Endothelial cell of umbilical vein (primary cell): ENCODE measurements at regions of chr19 and their contacts with region 1.

Region 1: GRCh38 chr19:36214386-36215275 is at the starts of genes ZNF146 and ZNF565:
- DNase-seq: peak; percentile 98
- H3K4me3 ChIP-seq: peak within 1 kb of the TSS; percentile 78 to 93 (median 87)
- H3K27ac ChIP-seq: peak within 1 kb of the TSS; percentile 82
- H3K4me1 ChIP-seq: peaks cover 5% of the 10 kb centered on the region
- H3K27me3 ChIP-seq: no peaks in the 10 kb centered on the region
- CTCF ChIP-seq: no peak
- POLR2A ChIP-seq: peak; percentile 86
- total RNA-seq, gene ZNF146: 63.3 and 65.9 TPM in 2 replicates
- total RNA-seq, gene ZNF565: 3.1 and 3.6 TPM in 2 replicates

Region 2: GRCh38 chr19:35908973-35909683 is 305.5 kb before region 1 on chr19:
- CTCF ChIA-PET with region 1: no interaction called
- POLR2A ChIA-PET with region 1: no interaction called
- dilution Hi-C with region 1: no loop called
- intact Hi-C with region 1: no loop called
- DNase-seq: no peak
- H3K4me3 ChIP-seq: no peak overlapping the region
- H3K27ac ChIP-seq: no peak overlapping the region
- H3K4me1 ChIP-seq: no peaks in the 10 kb centered on the region
- H3K27me3 ChIP-seq: no peaks in the 10 kb centered on the region
- CTCF ChIP-seq: no peak
- POLR2A ChIP-seq: no peak

Region 3: DNA sequence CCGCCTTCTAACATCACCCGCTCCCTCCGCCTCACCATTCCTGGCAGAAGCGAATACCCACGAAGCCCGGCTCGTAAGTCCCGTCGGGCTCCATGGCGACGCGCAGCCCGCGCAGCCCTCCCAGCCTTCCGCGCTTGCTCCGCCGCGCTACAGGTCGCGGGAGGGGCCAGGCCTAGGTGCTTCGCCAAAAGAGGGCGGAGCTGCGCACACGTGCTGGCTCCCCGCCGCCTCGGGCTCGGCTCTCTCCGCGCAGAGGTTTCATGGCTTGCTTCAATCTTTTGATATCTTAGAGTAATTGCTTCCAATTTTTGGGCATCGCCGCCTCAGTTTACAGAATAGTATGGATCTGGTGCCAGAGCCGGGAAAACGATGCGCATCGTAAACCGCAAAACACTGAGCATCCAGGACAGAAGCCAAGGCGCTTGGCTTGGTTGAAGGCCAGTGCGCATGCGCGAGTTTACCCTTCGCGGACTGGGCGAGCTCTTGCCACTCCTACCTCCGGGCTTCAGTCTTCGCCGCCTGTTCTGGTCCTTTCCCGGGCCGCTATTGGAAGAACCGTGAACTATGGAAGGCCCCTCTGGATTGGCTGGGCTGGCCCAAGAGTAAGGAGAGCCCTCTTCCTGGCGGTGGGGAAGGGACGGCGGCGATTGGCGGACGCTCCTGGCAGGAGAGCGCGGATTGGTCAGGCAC is 99.7 kb before region 1 on chr19 and contains the start of gene POLR2I:
- CTCF ChIA-PET with region 1: no interaction called
- POLR2A ChIA-PET with region 1: interaction called, 3 read pairs
- dilution Hi-C with region 1: no loop called
- intact Hi-C with region 1: loop called (anchors 1 kb)
- DNase-seq: peak; percentile 100
- H3K4me3 ChIP-seq: peak within 1 kb of the TSS; percentile 68 to 81 (median 79)
- H3K27ac ChIP-seq: peak within 1 kb of the TSS; percentile 68
- H3K4me1 ChIP-seq: peaks cover 15% of the 10 kb centered on the region
- H3K27me3 ChIP-seq: no peaks in the 10 kb centered on the region
- CTCF ChIP-seq: no peak
- POLR2A ChIP-seq: peak; percentile 59
- total RNA-seq, gene POLR2I: 63.3 and 64.8 TPM in 2 replicates

Region 4: DNA sequence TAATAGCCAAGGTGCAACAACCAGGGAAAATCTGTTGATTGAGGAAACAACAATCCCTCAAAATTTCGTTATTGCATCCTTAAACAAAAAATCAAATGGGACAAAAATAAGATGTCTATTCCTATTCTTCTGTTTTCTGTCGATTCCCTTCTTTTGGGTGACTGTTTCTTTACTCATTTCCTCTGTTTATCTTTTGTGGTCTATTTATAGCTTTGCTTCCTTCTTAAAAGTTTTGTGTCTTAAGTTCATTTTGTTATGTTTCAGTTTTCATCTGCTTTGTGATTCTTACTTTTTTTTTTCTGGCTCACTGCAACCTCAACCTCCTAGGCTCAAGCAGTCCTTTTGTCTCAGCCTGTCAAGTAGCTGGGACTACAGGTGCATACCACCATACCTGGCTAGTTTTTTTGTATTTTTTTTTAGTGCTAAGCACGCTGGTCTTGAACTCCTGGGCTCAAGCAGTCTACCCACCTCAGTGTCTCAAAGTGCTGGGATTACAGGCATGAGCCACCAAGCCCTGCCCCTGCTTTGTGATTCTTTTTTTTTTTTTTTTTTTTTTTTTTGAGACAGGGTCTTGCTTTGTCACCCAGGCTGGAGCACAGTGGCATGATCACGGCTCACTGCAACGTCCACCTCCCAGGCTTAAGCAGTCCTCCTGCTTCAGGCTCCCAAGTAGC is 10.7 kb after region 1 on chr19:
- CTCF ChIA-PET with region 1: interaction called, 6 read pairs
- POLR2A ChIA-PET with region 1: no interaction called
- dilution Hi-C with region 1: no loop called
- intact Hi-C with region 1: loop called (anchors 1 kb)
- DNase-seq: peak; percentile 72
- H3K4me3 ChIP-seq: peak overlapping the region in 1 of 3 experiments; percentile 42
- H3K27ac ChIP-seq: peak overlapping the region; percentile 83
- H3K4me1 ChIP-seq: peaks cover 22% of the 10 kb centered on the region
- H3K27me3 ChIP-seq: no peaks in the 10 kb centered on the region
- CTCF ChIP-seq: no peak
- POLR2A ChIP-seq: no peak

Region 5: DNA sequence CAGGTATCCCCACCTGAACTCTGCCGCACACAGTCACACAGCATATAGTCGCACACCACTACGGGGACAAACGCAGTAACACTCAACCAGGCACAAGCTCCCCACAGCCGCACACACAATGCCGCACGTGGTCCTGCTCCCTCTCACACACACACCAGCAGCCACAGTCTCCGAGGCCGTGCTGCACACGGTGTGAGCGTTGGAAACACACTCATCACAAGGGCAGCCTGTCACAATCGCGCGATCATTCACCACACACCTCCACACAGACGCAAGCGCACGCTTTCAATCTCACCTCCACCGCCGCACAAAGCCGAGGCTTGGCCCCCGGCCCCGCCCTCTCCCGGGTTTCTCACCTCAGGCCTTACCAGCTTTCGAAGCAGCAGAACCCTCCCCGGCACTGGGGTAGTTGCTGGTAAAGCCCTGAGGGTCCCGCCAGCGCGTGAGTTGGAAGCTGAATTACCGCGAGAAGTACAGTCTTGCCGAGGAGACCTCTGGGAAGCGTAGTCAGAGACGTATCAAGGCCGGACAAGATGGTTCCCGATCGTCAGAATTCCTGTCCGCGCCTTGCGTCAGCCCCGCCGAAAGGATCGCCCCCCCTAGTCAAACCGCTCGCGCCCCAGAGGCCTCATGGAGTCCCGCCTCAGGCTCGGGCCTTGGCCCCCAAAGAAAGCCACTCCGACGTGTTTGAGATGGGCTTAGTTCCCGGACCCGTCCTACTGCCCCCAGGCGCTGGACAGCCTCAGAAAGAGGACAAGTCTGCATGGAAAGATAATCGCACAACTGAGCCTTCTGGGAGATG is 274.7 kb after region 1 on chr19 and contains the start of gene ZNF566:
- CTCF ChIA-PET with region 1: no interaction called
- POLR2A ChIA-PET with region 1: interaction called, 5 read pairs
- dilution Hi-C with region 1: no loop called
- intact Hi-C with region 1: loop called (anchors 10 kb)
- DNase-seq: peak; percentile 97
- H3K4me3 ChIP-seq: peak within 1 kb of the TSS; percentile 51 to 80 (median 77)
- H3K27ac ChIP-seq: peak within 1 kb of the TSS; percentile 85
- H3K4me1 ChIP-seq: peaks cover 8% of the 10 kb centered on the region
- H3K27me3 ChIP-seq: no peaks in the 10 kb centered on the region
- CTCF ChIP-seq: peak in 1 of 2 donors; percentile 10
- POLR2A ChIP-seq: no peak
- total RNA-seq, gene ZNF566: 8.3 and 8.5 TPM in 2 replicates

Region 6: DNA sequence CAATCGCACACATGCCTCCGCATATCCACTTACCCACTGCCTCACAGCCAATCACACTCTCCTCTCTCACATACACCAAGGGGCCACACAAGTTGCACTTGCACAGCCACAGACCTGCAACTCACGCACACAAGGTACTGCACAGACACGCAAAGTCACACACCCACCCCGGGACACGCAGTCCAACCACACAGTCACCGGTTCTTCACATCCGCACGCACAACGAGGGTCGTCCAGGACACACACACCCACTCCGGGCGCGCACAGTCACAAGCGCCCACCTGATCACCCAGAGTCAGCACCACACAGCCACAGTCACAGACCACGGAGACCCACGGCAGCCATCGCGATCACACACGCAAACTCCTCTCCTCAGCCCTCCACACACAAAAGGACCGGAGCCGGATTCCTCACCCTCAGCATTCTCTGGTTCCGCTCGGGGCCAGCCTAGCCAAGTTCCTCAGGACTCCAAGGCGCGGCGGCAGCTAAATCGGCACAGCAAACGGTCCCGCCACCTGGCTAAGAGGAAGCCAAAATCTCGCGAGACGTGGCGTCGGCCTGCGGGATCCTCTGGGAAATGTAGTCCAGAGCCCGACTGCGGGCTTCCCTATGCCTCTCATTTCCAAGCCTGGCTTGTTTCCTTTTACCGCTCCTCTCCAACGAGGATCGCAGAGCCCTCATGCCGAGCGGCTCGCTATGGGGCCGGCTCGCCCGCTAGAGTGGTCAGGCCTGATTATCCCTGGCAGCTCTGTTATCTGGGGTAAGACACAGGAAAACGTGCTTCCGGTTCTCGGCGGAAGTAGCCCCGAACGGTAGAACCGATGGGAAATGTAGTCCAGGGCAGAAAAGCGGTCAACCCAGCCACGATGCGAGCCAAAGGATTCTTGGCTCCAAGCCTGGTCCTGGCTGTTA is 557.9 kb after region 1 on chr19 and contains the start of gene ZNF850:
- CTCF ChIA-PET with region 1: no interaction called
- POLR2A ChIA-PET with region 1: no interaction called
- dilution Hi-C with region 1: no loop called
- intact Hi-C with region 1: loop called (anchors 10 kb)
- DNase-seq: peak; percentile 92
- H3K4me3 ChIP-seq: peak within 1 kb of the TSS; percentile 31 to 76 (median 40)
- H3K27ac ChIP-seq: peak within 1 kb of the TSS; percentile 33
- H3K4me1 ChIP-seq: peaks cover 11% of the 10 kb centered on the region
- H3K27me3 ChIP-seq: no peaks in the 10 kb centered on the region
- CTCF ChIP-seq: no peak
- POLR2A ChIP-seq: no peak
- total RNA-seq, gene ZNF850: 3.6 and 4.5 TPM in 2 replicates